Colonic mucosa (tissue), 4 donors: ENCODE measurements at regions of chr11 and their contacts with region 1.

Region 1: GRCh38 chr11:18731949-18732821 is 6.2 kb upstream of the IGSF22 start:
- DNase-seq: peak; percentile 52
- H3K4me3 ChIP-seq: no peak overlapping the region
- H3K27ac ChIP-seq: no peak overlapping the region
- H3K4me1 ChIP-seq: no peaks in the 10 kb centered on the region
- H3K27me3 ChIP-seq: no peaks in the 10 kb centered on the region
- CTCF ChIP-seq: peak; percentile 92

Region 2: GRCh38 chr11:18115360-18116127 is 616.6 kb before region 1 on chr11:
- intact Hi-C with region 1: loop called (anchors 10 kb)
- DNase-seq: peak; percentile 68
- H3K4me3 ChIP-seq: no peak overlapping the region
- H3K27ac ChIP-seq: no peak overlapping the region
- H3K4me1 ChIP-seq: no peaks in the 10 kb centered on the region
- H3K27me3 ChIP-seq: no peaks in the 10 kb centered on the region
- CTCF ChIP-seq: peak; percentile 87

Region 3: DNA sequence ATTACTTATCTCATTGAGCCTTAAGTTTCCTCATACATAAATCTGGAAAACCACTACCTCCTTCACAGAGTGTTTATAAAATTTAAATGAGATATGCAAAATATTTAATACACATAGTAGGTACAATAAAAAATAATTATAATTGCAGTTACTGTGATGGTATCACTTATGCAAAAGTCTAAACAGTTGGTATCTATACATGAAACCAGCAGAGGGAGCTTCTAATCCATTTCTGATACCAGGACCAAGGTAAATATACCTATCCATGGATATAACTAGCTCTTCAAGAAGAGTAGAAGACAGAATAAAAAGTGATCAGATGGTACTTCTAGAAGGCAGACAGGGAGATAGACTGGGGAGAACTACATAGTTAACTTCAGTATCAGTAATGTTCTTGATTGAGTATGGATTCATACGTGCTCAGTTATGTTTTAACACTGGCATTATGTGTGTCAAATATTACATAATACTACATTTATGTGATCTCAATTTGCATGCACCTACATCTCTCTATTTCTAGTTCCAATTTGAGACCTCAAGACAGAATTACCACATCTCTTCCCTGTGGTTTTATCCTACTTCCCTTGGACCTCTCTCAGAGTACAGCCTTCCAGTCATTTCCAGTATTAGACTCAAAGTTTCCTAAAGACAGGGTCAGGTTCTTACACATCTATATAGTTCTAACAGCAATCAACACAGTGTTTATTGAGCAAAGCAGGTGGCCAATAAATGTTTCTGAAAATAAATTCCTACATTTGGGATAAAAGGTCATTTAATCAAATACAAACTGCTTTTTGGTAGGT is 191.8 kb before region 1 on chr11:
- intact Hi-C with region 1: loop called (anchors 10 kb)
- DNase-seq: no peak
- H3K4me3 ChIP-seq: no peak overlapping the region
- H3K27ac ChIP-seq: no peak overlapping the region
- H3K4me1 ChIP-seq: no peaks in the 10 kb centered on the region
- H3K27me3 ChIP-seq: no peaks in the 10 kb centered on the region
- CTCF ChIP-seq: peak; percentile 42